Right cardiac atrium (tissue), 5 donors: ENCODE measurements at regions of chr9 and their contacts with region 1.

Region 1: GRCh38 chr9:116124461-116125090 is 29.0 kb upstream of the PAPPA start:
- DNase-seq: no peak
- ATAC-seq: no peak
- H3K4me3 ChIP-seq: no peak overlapping the region
- H3K27ac ChIP-seq: no peak overlapping the region
- H3K4me1 ChIP-seq: no peaks in the 10 kb centered on the region
- H3K27me3 ChIP-seq: no peaks in the 10 kb centered on the region

Region 2: DNA sequence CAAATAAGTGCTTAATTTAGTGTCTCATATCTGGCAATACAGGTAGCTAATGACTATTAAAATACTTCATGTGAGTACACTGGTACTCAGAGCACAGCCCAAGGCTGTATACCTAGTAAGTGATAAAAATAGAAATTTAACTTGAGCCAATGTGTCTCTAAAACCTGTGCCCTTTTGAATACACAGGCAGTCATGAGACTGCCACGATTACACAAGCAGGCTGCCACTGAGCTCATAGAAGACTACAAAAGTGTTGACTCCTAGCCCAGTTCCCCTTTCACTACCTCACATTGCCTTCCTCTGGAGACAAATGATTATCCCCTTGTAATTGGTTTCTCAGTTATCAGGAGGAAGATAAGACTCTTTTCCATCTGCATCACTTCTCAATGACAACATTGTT is 37.3 kb before region 1 on chr9:
- intact Hi-C with region 1: loop called in 1 of 4 experiments (anchors 5 kb)
- DNase-seq: peak; percentile 39 to 69 (median 39)
- ATAC-seq: peak; percentile 90 to 92
- H3K4me3 ChIP-seq: no peak overlapping the region
- H3K27ac ChIP-seq: no peak overlapping the region
- H3K4me1 ChIP-seq: no peaks in the 10 kb centered on the region
- H3K27me3 ChIP-seq: no peaks in the 10 kb centered on the region